Aorta (tissue), 5 donors: ENCODE measurements at regions of chr2 and their contacts with region 1.

Region 1: GRCh38 chr2:66574701-66575624 is 140.0 kb downstream of the MEIS1 start:
- DNase-seq: peak; percentile 82 to 85
- ATAC-seq: peak; percentile 80
- H3K4me3 ChIP-seq: peak overlapping the region; percentile 50 to 71
- H3K27ac ChIP-seq: peak overlapping the region; percentile 61 to 94
- H3K4me1 ChIP-seq: no peaks in the 10 kb centered on the region
- H3K27me3 ChIP-seq: no peaks in the 10 kb centered on the region

Region 2: GRCh38 chr2:66305718-66306117 is 269.2 kb before region 1 on chr2:
- intact Hi-C with region 1: loop called in 1 of 2 experiments (anchors 10 kb)
- DNase-seq: peak; percentile 72 to 81
- ATAC-seq: peak; percentile 59
- H3K4me3 ChIP-seq: no peak overlapping the region
- H3K27ac ChIP-seq: no peak overlapping the region
- H3K4me1 ChIP-seq: peaks cover 0 to 3% of the 10 kb centered on the region in 2 donors
- H3K27me3 ChIP-seq: no peaks in the 10 kb centered on the region

Region 3: DNA sequence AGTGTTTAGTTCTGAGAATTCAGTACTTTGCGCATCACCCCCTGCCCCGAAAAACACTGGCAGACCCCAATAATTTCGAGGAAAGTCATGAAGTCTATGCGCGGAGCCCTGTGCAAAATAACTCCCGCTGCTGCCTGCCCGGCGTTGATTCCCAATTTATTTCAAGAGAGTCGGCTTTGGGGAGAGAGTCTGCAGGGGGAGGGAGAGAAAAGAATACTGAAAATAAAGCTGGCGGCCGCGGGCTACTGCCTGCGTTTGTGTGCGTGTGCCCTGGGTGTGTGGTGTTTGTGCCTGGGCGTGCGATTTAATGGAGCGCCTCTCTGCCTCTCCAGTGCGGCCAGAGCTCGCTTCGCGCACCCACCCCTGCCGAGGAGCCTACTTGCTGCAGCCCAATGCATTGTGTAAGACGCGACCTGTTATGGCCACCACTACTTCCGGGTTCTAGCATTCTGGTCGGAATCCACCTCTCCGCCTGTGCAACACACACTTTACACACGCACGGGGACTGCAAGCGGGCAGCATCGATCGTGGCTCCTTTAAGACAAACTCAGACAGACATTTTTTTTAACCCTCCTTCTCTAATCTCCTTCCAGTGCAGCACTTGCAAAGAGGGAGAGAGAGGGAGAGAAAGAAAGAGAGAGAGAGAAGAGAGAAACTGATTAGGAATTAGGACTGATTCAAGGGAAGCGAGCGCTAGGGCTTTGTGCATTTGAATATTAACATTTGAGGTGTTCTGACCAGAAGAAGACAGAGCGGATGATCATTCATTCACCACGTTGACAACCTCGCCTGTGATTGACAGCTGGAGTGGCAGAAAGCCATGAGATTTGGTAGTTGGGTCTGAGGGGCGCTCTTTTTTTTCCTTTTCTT is 140.0 kb before region 1 on chr2 and contains the start of gene MEIS1:
- intact Hi-C with region 1: loop called (anchors 1 to 2 kb)
- DNase-seq: peak; percentile 93 to 94
- ATAC-seq: peak; percentile 93
- H3K4me3 ChIP-seq: peak within 1 kb of the TSS; percentile 91 to 95
- H3K27ac ChIP-seq: peak within 1 kb of the TSS; percentile 64 to 87
- H3K4me1 ChIP-seq: no peaks in the 10 kb centered on the region
- H3K27me3 ChIP-seq: no peaks in the 10 kb centered on the region
- total RNA-seq, gene MEIS1: 35.4 to 76.6 TPM

Region 4: GRCh38 chr2:66495788-66496640 is 78.9 kb before region 1 on chr2:
- intact Hi-C with region 1: loop called in 1 of 2 experiments (anchors 5 kb)
- DNase-seq: peak; percentile 73 to 87
- ATAC-seq: peak; percentile 75
- H3K4me3 ChIP-seq: no peak overlapping the region
- H3K27ac ChIP-seq: peak overlapping the region; percentile 63 to 75
- H3K4me1 ChIP-seq: peaks cover 3 to 11% of the 10 kb centered on the region in 2 donors
- H3K27me3 ChIP-seq: no peaks in the 10 kb centered on the region

Region 5: DNA sequence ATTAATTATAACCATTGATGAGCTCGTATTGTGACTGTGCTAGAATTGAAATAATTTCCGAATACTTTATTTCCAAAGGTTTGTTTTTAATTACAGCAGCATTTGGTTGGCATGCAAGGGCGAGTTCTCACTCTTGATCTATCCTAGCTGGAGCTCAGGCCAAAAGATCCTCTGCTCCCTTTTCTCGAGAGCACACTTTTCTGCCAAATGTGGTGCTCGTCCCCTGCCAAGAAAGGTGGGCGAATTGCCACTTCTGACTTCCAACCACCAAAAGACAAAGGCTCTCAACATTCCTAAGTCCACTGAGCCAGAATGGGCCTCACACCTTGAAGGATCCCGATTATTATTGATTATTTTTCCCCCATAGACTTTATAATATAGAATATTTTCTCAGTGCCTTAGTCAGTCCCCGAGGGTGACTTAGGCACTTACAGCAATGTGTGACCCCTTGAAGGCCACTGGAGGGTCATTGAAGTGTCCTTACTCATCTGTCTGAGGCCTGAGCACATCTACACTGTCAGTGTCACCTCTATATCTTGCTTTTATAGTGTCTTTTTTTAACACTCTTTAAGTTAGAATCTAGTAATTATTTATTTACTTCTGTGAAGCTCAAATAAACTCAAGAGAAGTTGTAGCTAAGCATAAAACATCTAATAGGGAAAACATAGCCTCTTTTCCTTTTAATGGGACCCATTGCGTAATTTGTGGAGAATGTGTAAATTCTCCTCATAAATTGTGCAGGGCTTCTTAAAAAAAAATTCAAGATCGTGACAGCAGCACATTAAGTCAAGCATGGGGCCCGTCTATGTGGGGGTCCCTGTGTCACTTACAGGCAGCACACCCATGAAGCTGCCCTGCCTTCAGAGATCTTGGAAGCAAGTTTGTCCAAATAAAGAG is 41.7 kb before region 1 on chr2:
- intact Hi-C with region 1: no loop called
- DNase-seq: no peak
- ATAC-seq: no peak
- H3K4me3 ChIP-seq: no peak overlapping the region
- H3K27ac ChIP-seq: no peak overlapping the region
- H3K4me1 ChIP-seq: peaks cover 0 to 5% of the 10 kb centered on the region in 2 donors
- H3K27me3 ChIP-seq: no peaks in the 10 kb centered on the region

Region 6: GRCh38 chr2:67650291-67651133 is 1075.5 kb after region 1 on chr2:
- intact Hi-C with region 1: loop called (anchors 5 to 10 kb)
- DNase-seq: peak; percentile 88 to 89
- ATAC-seq: peak; percentile 94
- H3K4me3 ChIP-seq: no peak overlapping the region
- H3K27ac ChIP-seq: no peak overlapping the region
- H3K4me1 ChIP-seq: peaks cover 0 to 1% of the 10 kb centered on the region in 2 donors
- H3K27me3 ChIP-seq: no peaks in the 10 kb centered on the region

Region 7: DNA sequence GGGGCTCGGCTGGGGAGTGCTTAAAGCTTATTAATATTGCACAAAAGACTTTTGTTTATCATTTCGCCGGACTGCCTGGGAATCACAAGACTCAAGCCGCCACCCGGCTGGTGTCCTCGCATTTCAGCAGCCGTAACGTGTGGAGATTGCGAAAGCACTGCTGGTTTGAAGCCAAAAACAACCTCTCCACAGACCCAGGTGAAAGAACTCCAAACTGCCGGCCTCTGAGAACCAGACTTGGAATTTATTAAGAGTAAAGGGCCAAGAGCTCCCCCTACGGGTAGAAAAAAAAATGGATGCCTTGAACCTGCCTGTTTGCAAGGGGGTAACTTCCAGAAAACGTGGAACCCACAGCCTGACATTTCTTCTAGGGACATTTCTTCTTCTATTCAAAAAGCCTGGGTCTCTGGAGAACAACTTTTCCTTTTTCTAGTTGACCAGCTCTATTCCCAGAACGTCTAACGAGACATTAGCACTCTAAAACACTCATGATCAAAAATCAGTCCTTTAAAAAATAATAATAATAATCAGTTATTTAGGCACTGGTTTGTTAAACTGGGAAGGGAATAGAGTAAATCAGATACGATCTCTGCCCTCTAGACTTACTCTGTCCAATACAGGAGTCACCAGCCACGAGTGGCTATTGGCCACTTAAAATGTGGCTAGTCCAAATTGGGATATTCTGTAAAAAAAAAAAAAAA is 1271.6 kb after region 1 on chr2:
- intact Hi-C with region 1: loop called (anchors 5 to 10 kb)
- DNase-seq: peak; percentile 82 to 83
- ATAC-seq: peak; percentile 73
- H3K4me3 ChIP-seq: no peak overlapping the region
- H3K27ac ChIP-seq: no peak overlapping the region
- H3K4me1 ChIP-seq: peaks cover 0 to 1% of the 10 kb centered on the region in 2 donors
- H3K27me3 ChIP-seq: no peaks in the 10 kb centered on the region

Region 8: DNA sequence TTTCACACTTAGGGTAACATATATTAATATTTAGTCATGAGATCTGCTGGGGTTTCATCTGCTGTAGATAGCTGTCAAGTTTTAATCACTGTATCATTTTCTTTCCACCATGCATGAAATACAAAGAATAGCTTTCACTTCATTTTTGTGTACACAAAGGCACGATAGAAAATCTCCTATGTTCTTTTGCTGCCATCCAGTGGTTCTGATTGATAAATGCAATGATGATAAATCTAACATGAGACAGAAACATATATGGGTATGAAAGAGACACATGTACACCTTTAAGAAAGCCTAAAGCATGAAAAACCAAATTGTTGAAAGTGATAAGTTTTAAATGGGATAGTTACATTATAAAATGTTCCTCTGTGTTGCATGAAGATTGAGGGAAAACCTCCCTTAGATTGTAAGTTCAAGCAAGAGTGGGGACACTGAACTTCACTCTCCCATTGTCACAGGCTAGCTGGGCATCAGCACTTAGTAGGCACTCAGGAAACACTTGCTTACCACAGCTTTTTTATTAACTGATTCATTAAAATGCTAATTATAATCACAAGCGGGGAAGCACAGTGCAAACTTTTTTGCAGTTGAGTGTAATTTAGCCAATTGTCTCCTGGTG is 1456.7 kb after region 1 on chr2:
- intact Hi-C with region 1: loop called (anchors 10 kb)
- DNase-seq: no peak
- ATAC-seq: peak; percentile 64
- H3K4me3 ChIP-seq: no peak overlapping the region
- H3K27ac ChIP-seq: no peak overlapping the region
- H3K4me1 ChIP-seq: no peaks in the 10 kb centered on the region
- H3K27me3 ChIP-seq: no peaks in the 10 kb centered on the region